Activated CD4-positive, alpha-beta T cell treated with anti-CD3 and anti-CD28 coated beads for 36 hours (primary cell): ENCODE measurements at regions of chr10 and their contacts with region 1.

Region 1: DNA sequence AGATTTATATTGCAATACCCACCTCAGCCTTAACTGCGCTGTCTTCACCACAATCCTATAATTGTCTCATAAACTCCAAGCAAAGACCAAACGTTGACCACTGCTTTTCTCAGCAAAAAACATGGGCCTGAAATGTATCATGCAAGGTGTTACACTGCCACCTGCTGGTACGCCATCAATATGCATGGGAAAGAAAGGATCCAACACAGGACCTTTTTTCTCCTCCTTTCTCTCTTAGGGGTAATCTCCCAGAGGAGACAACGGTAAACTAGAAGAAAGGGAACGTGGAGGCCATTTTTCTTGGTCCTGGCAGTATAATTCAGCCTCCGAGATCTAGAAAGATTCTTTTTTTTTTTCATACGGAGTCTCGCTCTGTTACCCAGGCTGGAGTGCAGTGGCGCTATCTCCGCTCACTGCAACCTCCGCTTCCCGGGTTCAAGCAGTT is 79.1 kb upstream of the MPP7 start:
- DNase-seq: peak; percentile 91
- ATAC-seq: peak; percentile 81
- H3K4me3 Mint-ChIP-seq: no peak overlapping the region
- H3K27ac Mint-ChIP-seq: no peak overlapping the region
- H3K4me1 Mint-ChIP-seq: peaks cover 29% of the 10 kb centered on the region
- H3K27me3 Mint-ChIP-seq: peaks cover 2% of the 10 kb centered on the region

Region 2: GRCh38 chr10:27742195-27743011 is 639.5 kb before region 1 on chr10:
- CTCF ChIA-PET with region 1: interaction called, 3 read pairs
- POLR2A ChIA-PET with region 1: no interaction called
- intact Hi-C with region 1: loop called (anchors 1 to 5 kb)
- DNase-seq: peak; percentile 92
- ATAC-seq: peak; percentile 91
- H3K4me3 Mint-ChIP-seq: peak overlapping the region; percentile 65
- H3K27ac Mint-ChIP-seq: peak overlapping the region; percentile 47
- H3K4me1 Mint-ChIP-seq: peaks cover 33% of the 10 kb centered on the region
- H3K27me3 Mint-ChIP-seq: peaks cover 56% of the 10 kb centered on the region

Region 3: DNA sequence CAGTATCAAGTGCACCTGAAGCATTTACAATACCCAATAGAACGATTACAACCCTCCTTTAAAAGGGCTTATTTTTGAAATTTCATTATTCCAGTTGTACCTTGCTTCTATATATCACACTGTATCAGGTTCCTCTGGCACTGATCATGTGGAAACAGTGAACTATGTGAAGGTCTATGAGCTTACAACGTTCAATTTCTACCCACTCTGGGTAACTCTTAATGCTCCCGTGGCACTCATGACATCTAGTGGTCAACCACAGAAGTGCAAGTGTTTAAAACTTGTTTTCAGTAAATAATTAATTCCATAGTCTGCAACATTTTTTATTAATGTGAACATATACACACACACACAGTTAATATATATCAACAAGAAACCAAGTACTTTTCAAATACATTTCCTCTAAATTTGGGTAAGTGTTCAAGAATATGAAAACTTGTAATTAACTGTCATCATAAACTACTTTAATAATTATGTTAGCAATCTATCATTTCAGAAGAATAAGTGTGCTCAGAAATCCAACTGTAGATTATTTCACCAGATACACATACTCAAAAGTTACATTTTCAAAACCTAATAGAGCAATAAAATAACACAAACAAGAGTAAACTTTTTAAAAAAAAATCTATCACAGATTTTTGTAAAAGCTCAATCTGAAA is 140.1 kb before region 1 on chr10:
- CTCF ChIA-PET with region 1: interaction called, 160 read pairs
- POLR2A ChIA-PET with region 1: no interaction called
- intact Hi-C with region 1: no loop called
- DNase-seq: peak; percentile 57
- ATAC-seq: peak; percentile 79
- H3K4me3 Mint-ChIP-seq: no peak overlapping the region
- H3K27ac Mint-ChIP-seq: no peak overlapping the region
- H3K4me1 Mint-ChIP-seq: peaks cover 30% of the 10 kb centered on the region
- H3K27me3 Mint-ChIP-seq: no peaks in the 10 kb centered on the region

Region 4: DNA sequence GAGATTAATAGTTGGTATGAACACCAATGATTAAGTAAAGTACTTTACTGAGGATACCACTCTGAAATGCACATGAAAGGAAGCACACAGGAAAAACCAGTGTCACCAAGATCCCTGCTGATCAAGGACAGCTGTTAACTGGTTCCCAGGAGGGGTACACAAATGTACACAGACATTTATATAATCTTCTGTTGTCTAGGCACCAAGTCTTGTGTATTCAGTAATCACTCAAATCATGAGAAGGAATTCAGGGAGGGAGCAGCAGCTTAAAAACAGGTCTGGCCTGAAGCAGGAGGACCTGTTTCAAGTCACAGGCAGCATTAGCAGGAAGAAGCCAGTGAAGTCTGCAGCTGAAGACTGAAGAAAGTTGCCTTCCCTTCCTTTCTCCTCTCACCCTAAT is 97.8 kb before region 1 on chr10:
- CTCF ChIA-PET with region 1: interaction called, 15 read pairs
- POLR2A ChIA-PET with region 1: no interaction called
- intact Hi-C with region 1: no loop called
- DNase-seq: no peak
- ATAC-seq: no peak
- H3K4me3 Mint-ChIP-seq: no peak overlapping the region
- H3K27ac Mint-ChIP-seq: peak overlapping the region; percentile 26
- H3K4me1 Mint-ChIP-seq: peaks cover 42% of the 10 kb centered on the region
- H3K27me3 Mint-ChIP-seq: no peaks in the 10 kb centered on the region

Region 5: GRCh38 chr10:28326516-28327490 is 55.1 kb before region 1 on chr10:
- CTCF ChIA-PET with region 1: interaction called, 19 read pairs
- POLR2A ChIA-PET with region 1: no interaction called
- intact Hi-C with region 1: no loop called
- DNase-seq: no peak
- ATAC-seq: no peak
- H3K4me3 Mint-ChIP-seq: no peak overlapping the region
- H3K27ac Mint-ChIP-seq: peak overlapping the region; percentile 34
- H3K4me1 Mint-ChIP-seq: peaks cover 41% of the 10 kb centered on the region
- H3K27me3 Mint-ChIP-seq: no peaks in the 10 kb centered on the region

Region 6: DNA sequence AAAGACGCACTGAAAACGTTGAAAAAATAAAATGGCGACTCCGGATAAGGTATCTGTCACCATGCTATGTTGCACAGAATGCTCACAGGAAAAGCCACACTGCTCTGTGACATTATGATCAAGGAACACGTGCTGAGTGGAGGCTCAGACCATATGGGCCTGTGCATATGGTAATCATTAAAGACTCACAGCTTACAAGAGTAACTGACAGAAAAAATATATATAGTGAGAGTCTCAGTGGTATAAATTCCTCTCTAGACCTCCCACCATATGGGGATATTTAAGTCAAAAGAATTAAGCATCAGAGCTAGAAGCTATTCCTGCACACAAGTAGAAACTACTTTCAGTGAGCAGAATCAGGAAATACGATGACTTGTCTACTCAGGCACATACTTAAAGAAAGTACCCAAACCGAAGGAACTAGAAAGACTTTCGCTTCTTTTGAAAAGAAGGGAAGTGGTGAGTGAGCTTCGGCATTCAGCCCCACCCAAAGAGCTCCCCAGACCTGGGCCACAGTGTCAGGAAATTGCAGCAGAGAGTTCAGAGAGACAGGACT is 13.9 kb before region 1 on chr10:
- CTCF ChIA-PET with region 1: interaction called, 37 read pairs
- POLR2A ChIA-PET with region 1: interaction called, 17 read pairs
- intact Hi-C with region 1: loop called in 1 of 2 experiments (anchors 1 kb)
- DNase-seq: peak; percentile 76
- ATAC-seq: peak; percentile 90
- H3K4me3 Mint-ChIP-seq: peak overlapping the region; percentile 54
- H3K27ac Mint-ChIP-seq: peak overlapping the region; percentile 96
- H3K4me1 Mint-ChIP-seq: peaks cover 44% of the 10 kb centered on the region
- H3K27me3 Mint-ChIP-seq: no peaks in the 10 kb centered on the region

Region 7: DNA sequence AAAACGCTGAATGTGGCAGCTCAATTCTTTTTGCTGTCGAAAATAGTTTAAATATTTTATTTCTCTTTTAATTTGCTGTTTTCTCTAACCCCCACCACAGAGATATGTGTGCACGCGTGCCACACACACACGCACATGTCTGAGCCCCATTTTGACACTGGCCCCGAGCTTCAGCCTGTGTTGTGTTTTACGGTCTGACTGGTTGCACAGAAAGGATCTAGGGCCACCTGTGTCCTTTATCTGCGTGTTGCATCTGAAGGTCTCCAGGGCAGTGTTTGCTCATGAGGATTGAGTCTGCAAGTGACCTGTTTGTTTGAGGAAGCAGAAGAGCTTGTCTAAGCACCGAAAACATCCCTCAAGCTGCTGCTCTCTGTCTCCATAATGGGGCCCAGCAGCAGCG is 640.5 kb after region 1 on chr10:
- CTCF ChIA-PET with region 1: no interaction called
- POLR2A ChIA-PET with region 1: no interaction called
- intact Hi-C with region 1: no loop called
- DNase-seq: no peak
- ATAC-seq: no peak
- H3K4me3 Mint-ChIP-seq: no peak overlapping the region
- H3K27ac Mint-ChIP-seq: no peak overlapping the region
- H3K4me1 Mint-ChIP-seq: no peaks in the 10 kb centered on the region
- H3K27me3 Mint-ChIP-seq: peaks cover 8% of the 10 kb centered on the region

Region 8: GRCh38 chr10:29105531-29106215 is 723.7 kb after region 1 on chr10:
- CTCF ChIA-PET with region 1: no interaction called
- POLR2A ChIA-PET with region 1: no interaction called
- intact Hi-C with region 1: no loop called
- DNase-seq: no peak
- ATAC-seq: no peak
- H3K4me3 Mint-ChIP-seq: no peak overlapping the region
- H3K27ac Mint-ChIP-seq: no peak overlapping the region
- H3K4me1 Mint-ChIP-seq: no peaks in the 10 kb centered on the region
- H3K27me3 Mint-ChIP-seq: peaks cover 8% of the 10 kb centered on the region